Activated CD4-positive, alpha-beta T cell treated with anti-CD3 and anti-CD28 coated beads for 36 hours (primary cell): ENCODE measurements at regions of chr20 and their contacts with region 1.

Region 1: DNA sequence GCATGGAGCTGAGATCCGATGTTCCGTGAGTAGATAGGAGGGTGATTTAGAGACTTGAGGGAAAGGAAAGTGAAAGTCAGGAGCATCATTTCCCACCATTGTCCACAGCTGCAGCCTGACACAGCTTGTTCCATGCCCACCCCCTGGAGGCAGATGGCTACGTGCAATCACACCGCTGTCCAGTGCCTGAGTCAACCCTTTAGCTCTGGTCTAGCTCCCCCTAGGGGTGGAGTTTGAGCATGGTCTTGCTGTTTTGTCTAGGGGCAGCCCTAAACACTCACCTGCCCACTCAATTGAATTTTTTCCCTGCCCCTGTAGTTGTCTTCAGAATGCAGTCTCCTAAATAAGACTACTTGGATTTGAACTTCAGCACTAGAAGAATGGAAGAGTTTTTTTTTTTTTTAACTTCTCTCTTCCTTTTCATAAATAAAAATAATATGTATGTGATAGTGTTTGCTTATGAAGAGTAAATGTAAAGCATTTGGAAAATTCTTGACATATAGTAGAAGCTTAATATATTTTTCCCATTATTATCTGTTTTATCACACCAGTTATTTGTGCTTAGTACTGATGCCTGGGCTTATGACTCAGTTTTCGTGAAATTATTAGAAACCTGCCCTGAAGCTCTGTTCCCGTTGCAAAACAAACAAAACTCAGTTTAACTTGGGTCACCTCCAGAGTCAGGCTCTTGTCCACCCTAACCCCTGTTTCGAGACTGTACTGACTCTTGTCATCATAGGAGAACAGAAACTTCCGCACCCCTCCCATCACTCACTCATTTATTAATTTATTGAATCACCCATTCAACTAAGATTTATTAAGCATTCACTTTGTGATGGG is 814.8 kb downstream of the MAFB start:
- DNase-seq: peak; percentile 68
- ATAC-seq: peak; percentile 36
- H3K4me3 Mint-ChIP-seq: no peak overlapping the region
- H3K27ac Mint-ChIP-seq: no peak overlapping the region
- H3K4me1 Mint-ChIP-seq: no peaks in the 10 kb centered on the region
- H3K27me3 Mint-ChIP-seq: no peaks in the 10 kb centered on the region

Region 2: DNA sequence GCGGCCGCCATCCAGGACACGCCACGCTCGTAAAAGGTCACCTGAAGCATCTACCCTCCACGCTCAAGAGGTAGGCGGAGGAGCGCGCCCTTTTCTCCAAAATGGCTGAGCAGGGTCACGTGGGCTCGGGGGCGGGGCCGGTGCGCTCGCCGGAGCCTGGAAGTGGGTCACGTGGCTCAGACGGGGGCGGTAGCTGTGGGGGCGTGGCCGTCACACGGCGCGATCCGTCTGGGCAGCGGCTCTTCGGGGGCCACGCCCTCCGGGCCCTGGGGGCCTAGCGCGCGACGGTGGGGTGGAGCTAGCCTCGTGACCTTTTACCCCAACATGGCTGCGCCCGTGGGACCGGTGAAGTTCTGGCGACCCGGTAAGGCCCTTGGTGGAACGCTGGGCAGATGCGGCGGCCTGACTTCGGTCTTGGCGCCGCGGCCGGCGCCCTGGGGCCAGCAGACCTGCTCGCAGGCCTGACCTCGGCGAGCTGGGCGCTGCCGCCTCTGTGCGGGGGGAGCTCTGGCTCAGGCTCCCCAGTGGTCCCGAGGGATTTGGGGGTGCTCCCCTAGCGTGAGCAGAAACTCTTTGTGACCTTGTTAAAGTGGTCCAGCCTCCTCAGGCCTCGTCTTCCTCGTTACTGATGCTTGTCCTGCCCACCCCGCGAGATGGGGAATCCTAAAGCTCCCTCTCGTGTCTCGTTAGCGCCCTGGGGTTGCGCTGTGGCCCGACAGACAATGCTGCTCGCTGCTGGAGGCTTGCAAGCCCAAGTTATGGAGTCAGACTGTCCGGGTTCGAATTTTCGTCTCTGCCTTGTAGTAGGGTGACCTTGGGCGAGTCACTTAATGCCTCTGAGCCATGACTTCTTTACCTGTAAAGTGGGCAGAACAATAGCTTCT is 912.0 kb before region 1 on chr20 and contains the start of gene DHX35:
- CTCF ChIA-PET with region 1: no interaction called
- POLR2A ChIA-PET with region 1: no interaction called
- intact Hi-C with region 1: no loop called
- DNase-seq: peak; percentile 99
- ATAC-seq: peak; percentile 99
- H3K4me3 Mint-ChIP-seq: peak within 1 kb of the TSS; percentile 94
- H3K27ac Mint-ChIP-seq: peak within 1 kb of the TSS; percentile 95
- H3K4me1 Mint-ChIP-seq: peaks cover 29% of the 10 kb centered on the region
- H3K27me3 Mint-ChIP-seq: no peaks in the 10 kb centered on the region
- total RNA-seq, gene DHX35: 8.7 to 12.0 TPM

Region 3: GRCh38 chr20:39112178-39112743 is 762.0 kb before region 1 on chr20:
- CTCF ChIA-PET with region 1: no interaction called
- POLR2A ChIA-PET with region 1: no interaction called
- intact Hi-C with region 1: loop called in 1 of 2 experiments (anchors 2 kb)
- DNase-seq: peak; percentile 46
- ATAC-seq: no peak
- H3K4me3 Mint-ChIP-seq: no peak overlapping the region
- H3K27ac Mint-ChIP-seq: no peak overlapping the region
- H3K4me1 Mint-ChIP-seq: no peaks in the 10 kb centered on the region
- H3K27me3 Mint-ChIP-seq: peaks cover 39% of the 10 kb centered on the region

Region 4: GRCh38 chr20:39264506-39265172 is 609.6 kb before region 1 on chr20:
- CTCF ChIA-PET with region 1: interaction called, 4 read pairs
- POLR2A ChIA-PET with region 1: no interaction called
- intact Hi-C with region 1: loop called (anchors 1 to 10 kb)
- DNase-seq: peak; percentile 73
- ATAC-seq: peak; percentile 89
- H3K4me3 Mint-ChIP-seq: no peak overlapping the region
- H3K27ac Mint-ChIP-seq: no peak overlapping the region
- H3K4me1 Mint-ChIP-seq: peaks cover 2% of the 10 kb centered on the region
- H3K27me3 Mint-ChIP-seq: peaks cover 4% of the 10 kb centered on the region